HCT116 (cell line): ENCODE measurements at regions of chr12 and their contacts with region 1.

Region 1: GRCh38 chr12:122399592-122400373 is 22.7 kb downstream of the CLIP1 start:
- DNase-seq: peak; percentile 83
- ATAC-seq: peak; percentile 84
- H3K4me3 ChIP-seq: peak overlapping the region; percentile 42 to 53
- H3K27ac ChIP-seq: peak overlapping the region; percentile 91
- H3K4me1 ChIP-seq: peaks cover 36 to 64% of the 10 kb centered on the region in 2 experiments
- H3K27me3 ChIP-seq: no peaks in the 10 kb centered on the region
- CTCF ChIP-seq: peak; percentile 64 to 85 (median 73)
- POLR2A ChIP-seq: no peak
- RAD21 ChIP-seq: peak; percentile 96

Region 2: DNA sequence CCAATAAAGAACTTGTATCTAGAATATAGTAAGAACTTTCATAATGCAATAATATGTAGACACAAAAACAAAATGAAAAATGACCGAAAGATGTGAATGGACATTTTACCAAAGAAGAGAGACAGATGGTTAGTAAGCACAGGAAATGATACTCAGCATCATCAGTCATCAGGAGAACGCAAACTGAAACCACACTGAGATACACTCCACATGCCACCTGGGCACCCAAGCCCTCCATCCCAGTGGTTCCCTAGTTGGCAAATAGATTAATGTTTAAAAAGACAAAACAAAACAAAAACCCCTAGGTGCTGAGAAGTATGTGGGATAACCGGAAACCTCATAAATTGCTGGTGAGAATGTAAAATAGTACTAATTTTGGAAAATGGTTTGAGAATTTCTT is 106.7 kb before region 1 on chr12:
- CTCF ChIA-PET with region 1: no interaction called
- POLR2A ChIA-PET with region 1: no interaction called
- RAD21 ChIA-PET with region 1: no interaction called
- intact Hi-C with region 1: no loop called
- DNase-seq: no peak
- ATAC-seq: no peak
- H3K4me3 ChIP-seq: no peak overlapping the region
- H3K27ac ChIP-seq: no peak overlapping the region
- H3K4me1 ChIP-seq: no peaks in the 10 kb centered on the region
- H3K27me3 ChIP-seq: no peaks in the 10 kb centered on the region
- CTCF ChIP-seq: no peak
- POLR2A ChIP-seq: no peak
- RAD21 ChIP-seq: no peak

Region 3: GRCh38 chr12:122421821-122422729 is 22.3 kb after region 1 on chr12 and contains the start of gene CLIP1:
- CTCF ChIA-PET with region 1: interaction called, 25 read pairs
- POLR2A ChIA-PET with region 1: interaction called, 21 read pairs
- RAD21 ChIA-PET with region 1: interaction called, 3 to 7 read pairs
- intact Hi-C with region 1: loop called (anchors 1 kb)
- DNase-seq: no peak
- ATAC-seq: peak; percentile 76
- H3K4me3 ChIP-seq: peak within 1 kb of the TSS; percentile 77 to 85
- H3K27ac ChIP-seq: peak within 1 kb of the TSS; percentile 95
- H3K4me1 ChIP-seq: peaks cover 24 to 35% of the 10 kb centered on the region in 2 experiments
- H3K27me3 ChIP-seq: no peaks in the 10 kb centered on the region
- CTCF ChIP-seq: 0 out of 6 replicates have a peak, but pooled peaks have one; percentile 7 to 21 (median 20)
- POLR2A ChIP-seq: peak; percentile 28
- RAD21 ChIP-seq: peak; percentile 51
- total RNA-seq, gene CLIP1: 42.9 TPM

Region 4: DNA sequence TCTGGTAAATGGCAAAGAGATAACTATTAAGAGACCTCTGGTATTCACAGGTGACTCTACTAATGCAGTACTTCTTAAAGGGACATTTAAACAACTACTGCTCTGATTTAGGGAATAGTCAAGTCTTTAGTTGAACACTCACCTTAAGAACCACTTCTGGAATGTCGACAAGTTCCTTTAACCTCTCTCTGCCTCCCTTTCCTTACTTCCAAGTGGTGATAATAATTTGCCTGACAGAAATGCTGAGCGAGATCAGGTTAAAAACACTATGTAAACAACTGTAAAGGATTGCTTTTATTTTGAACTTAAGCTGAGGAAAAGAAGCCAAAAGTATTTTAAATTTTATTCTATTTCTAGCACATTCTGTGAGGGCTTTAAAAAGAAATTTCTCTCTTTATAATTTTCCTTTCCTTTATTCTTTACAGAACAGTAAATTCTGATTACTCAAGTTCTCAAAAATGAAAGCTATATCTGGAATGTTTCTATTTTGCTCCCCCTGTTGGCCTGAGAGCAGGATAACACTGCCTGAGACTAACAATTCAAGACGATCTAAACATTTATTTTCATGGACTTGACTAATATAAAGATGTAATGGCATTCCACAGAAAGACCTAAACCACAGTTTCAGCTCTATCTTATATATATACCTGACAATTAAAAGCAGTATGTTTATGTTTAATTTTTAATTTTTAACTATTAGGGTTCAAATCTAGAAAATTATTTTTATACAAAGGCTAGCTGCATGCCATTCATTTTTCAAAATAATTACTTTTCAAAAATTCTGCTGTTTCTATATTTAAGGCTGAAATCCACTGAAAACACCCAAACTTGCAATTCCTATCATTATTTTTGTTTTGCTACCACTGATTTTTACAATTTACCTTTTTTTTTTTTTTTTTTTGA is 71.8 kb after region 1 on chr12:
- CTCF ChIA-PET with region 1: interaction called, 112 read pairs
- POLR2A ChIA-PET with region 1: interaction called, 17 read pairs
- RAD21 ChIA-PET with region 1: interaction called, 14 to 17 read pairs
- intact Hi-C with region 1: loop called (anchors 1 kb)
- DNase-seq: peak; percentile 42
- ATAC-seq: peak; percentile 67; the same call in 1 of the 2 replicates
- H3K4me3 ChIP-seq: no peak overlapping the region
- H3K27ac ChIP-seq: no peak overlapping the region
- H3K4me1 ChIP-seq: peaks cover 0 to 10% of the 10 kb centered on the region in 2 experiments; a peak in 2 of 4 replicates
- H3K27me3 ChIP-seq: no peaks in the 10 kb centered on the region
- CTCF ChIP-seq: peak; percentile 67 to 78 (median 77)
- POLR2A ChIP-seq: no peak
- RAD21 ChIP-seq: peak; percentile 81

Region 5: GRCh38 chr12:122500685-122501488 is 101.1 kb after region 1 on chr12 and contains the start of gene ZCCHC8:
- CTCF ChIA-PET with region 1: interaction called, 8 read pairs
- POLR2A ChIA-PET with region 1: interaction called, 22 read pairs
- RAD21 ChIA-PET with region 1: interaction called in 1 of 2 experiments, 5 read pairs
- intact Hi-C with region 1: loop called (anchors 1 kb)
- DNase-seq: peak; percentile 96
- ATAC-seq: peak; percentile 97
- H3K4me3 ChIP-seq: peak within 1 kb of the TSS; percentile 70 to 94
- H3K27ac ChIP-seq: peak within 1 kb of the TSS; percentile 86
- H3K4me1 ChIP-seq: peaks cover 10 to 19% of the 10 kb centered on the region in 2 experiments; a peak in 3 of 4 replicates
- H3K27me3 ChIP-seq: no peaks in the 10 kb centered on the region
- CTCF ChIP-seq: peak in 2 of 3 experiments; percentile 26; a peak in 3 of 6 replicates
- POLR2A ChIP-seq: peak; percentile 78
- RAD21 ChIP-seq: no peak
- total RNA-seq, gene ZCCHC8: 30.5 TPM

Region 6: DNA sequence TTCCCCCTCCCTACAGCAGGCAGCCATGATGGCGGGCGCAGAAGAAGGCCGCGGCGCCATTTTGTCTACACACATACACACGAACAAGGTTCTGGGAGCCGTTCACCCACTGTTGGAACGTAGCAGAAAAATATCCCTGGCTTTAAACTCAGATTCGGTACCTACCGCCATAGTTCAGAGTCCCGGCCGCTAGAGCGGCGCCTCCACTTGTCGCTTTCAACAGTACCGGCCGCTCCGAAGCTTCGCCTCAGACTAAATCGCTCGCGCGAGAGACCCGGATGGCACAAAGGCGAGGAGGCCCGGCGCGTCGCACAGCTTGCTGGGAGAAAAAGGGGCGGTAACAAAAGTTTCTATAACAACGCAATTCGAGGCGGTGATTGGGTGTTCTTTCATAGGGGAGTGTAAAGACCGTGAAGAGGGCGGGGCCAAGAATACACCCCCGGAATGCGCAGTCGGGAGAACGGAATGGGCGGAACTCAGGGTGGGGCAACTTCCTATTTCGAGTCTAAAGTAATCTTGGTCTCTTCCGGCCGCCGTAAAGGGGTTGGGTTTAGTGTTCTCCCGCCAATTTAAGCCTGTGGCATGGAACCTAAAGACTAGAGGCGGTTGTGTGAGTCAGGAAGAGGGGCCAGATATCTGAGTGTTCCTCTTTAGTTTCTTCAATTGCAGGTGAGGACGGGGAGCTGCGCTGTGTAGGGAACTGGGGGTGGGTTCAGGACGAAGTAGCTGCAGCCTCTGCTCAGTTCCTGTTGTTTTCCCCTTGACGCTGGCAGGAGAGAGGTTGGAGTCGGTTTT is 127.1 kb after region 1 on chr12 and contains the starts of genes KNTC1 and RSRC2:
- CTCF ChIA-PET with region 1: interaction called, 3 read pairs
- POLR2A ChIA-PET with region 1: interaction called, 12 read pairs
- RAD21 ChIA-PET with region 1: no interaction called
- intact Hi-C with region 1: no loop called
- DNase-seq: peak; percentile 99
- ATAC-seq: peak; percentile 93
- H3K4me3 ChIP-seq: peak within 1 kb of the TSS; percentile 82 to 97
- H3K27ac ChIP-seq: peak within 1 kb of the TSS; percentile 83
- H3K4me1 ChIP-seq: peaks cover 8 to 24% of the 10 kb centered on the region in 2 experiments
- H3K27me3 ChIP-seq: no peaks in the 10 kb centered on the region
- CTCF ChIP-seq: no peak
- POLR2A ChIP-seq: peak; percentile 95
- RAD21 ChIP-seq: no peak; the same call in 1 of the 2 replicates
- total RNA-seq, gene KNTC1: 70.2 TPM
- total RNA-seq, gene RSRC2: 68.7 TPM